ENCODE measurements at regions of chr20 and their contacts with region 1.

Region 1: DNA sequence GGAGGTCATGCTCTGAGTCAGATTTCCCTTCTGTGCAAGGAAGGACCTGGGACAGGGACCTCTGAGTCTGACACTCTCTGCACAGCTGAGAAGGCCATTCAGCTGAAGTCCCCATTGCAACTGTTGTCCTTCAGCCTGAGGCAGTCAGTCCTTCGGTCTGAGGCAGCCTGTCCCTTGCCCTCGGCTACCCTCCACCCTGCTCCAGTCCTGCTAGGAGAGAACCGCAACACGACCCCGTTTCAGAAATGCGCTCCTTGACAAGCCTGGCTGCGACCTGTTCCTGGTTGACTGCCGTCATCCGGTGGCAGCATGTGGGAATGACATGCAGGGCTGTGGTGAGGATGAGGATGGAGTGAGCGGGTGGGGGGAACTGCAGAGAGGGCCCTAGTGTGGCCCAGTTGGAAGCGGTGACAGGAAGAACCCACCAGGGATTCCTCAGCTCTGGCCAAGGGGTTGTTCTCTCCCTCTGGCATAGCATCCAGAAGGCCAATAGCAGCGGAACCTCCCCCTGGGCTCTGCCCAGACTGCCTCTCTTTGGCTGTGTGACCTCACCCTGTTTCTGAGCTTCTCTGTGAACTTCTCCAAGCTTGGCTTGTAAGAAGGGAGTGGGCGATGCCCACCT is 40.3 kb upstream of the ANGPT4 start:
- DNase-seq: peak; percentile 33 to 81 (median 61)
- H3K4me3 ChIP-seq: no peak overlapping the region
- H3K27ac ChIP-seq: no peak overlapping the region
- H3K27me3 ChIP-seq: peaks cover 0 to 40% (median 14%) of the 10 kb centered on the region in 45 donors
- CTCF ChIP-seq: peak; percentile 38 to 100 (median 95)

Region 2: GRCh38 chr20:821046-821730 is 135.3 kb before region 1 on chr20:
- intact Hi-C with region 1: loop called (anchors 1 kb)
- DNase-seq: no peak
- H3K4me3 ChIP-seq: no peak overlapping the region
- H3K27ac ChIP-seq: no peak overlapping the region
- H3K27me3 ChIP-seq: peaks cover 0 to 4% (median 0%) of the 10 kb centered on the region in 45 donors
- CTCF ChIP-seq: no peak

Region 3: GRCh38 chr20:1225783-1226654 is 269.6 kb after region 1 on chr20 and contains the start of gene RAD21L1:
- intact Hi-C with region 1: no loop called
- DNase-seq: peak; percentile 51 to 86 (median 62)
- H3K4me3 ChIP-seq: peak within 1 kb of the TSS; percentile 42 to 86 (median 68)
- H3K27ac ChIP-seq: peak within 1 kb of the TSS in 12 of 59 donors; percentile 11 to 68 (median 38)
- H3K27me3 ChIP-seq: peaks cover 0 to 21% (median 0%) of the 10 kb centered on the region in 45 donors
- CTCF ChIP-seq: no peak
- total RNA-seq, gene RAD21L1: 0.23 to 3.2 (median 0.73) TPM in 74 of 120 experiments, not detected in the others

Measured in dorsolateral prefrontal cortex (tissue), 120 donors.